ENCODE measurements at regions of chr2 and their contacts with region 1.

Region 1: DNA sequence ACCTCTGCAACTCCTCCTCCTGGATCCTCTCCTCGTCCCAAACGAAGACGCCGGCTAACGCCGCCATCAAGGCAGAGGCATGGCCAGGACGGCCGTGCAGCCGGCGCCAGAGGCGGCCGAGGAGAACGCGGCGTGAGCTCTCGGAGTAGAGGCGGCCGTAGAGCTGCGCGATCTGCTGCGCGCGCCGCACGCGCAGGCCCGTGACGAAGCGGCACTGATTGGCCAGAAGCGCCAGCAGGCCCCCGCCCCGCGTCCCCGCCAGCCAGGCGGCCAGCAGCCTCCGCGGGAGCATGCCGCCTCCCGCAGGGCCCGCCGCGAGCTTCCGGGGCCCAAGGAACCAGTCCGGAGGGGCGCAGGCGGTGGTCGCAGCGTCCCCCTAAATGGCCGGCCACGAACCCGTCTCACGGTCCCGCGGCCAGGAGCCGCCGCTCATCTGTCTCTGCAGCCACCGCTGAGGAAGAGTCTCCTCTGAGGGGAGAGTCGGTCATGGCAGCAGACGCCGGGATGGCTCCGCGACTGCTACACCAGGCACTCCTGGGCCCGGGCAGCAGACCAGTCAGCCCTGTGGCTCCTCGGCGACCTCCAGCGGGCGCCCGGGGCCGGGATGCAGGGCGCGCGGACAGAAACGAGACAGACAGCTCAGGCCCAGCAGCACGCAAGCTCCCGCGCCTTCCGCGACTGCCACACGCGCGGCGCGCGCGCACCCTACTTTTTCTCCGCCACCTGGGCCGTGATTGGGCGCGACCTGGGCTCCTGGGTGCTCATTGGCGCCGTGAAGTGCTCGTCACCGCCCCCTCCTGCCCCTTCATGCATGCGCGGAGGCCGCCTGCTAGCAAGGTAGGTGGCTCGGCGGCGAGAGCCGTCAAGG is at the start of gene STARD7:
- DNase-seq: peak; percentile 93 to 97 (median 95)
- ATAC-seq: peak; percentile 92
- H3K4me3 ChIP-seq: peak within 1 kb of the TSS; percentile 83
- H3K4me3 Mint-ChIP-seq: peak within 1 kb of the TSS; percentile 88 to 100 (median 95)
- H3K27ac ChIP-seq: peak within 1 kb of the TSS; percentile 87
- H3K27ac Mint-ChIP-seq: peak within 1 kb of the TSS; percentile 86 to 99 (median 93)
- H3K4me1 ChIP-seq: peaks cover 30 to 37% of the 10 kb centered on the region in 2 donors
- H3K4me1 Mint-ChIP-seq: peaks cover 37 to 57% (median 51%) of the 10 kb centered on the region in 7 donors
- H3K27me3 ChIP-seq: no peaks in the 10 kb centered on the region
- H3K27me3 Mint-ChIP-seq: no peaks in the 10 kb centered on the region
- total RNA-seq, gene STARD7: 56.5 to 133 (median 74.2) TPM

Region 2: GRCh38 chr2:96083064-96083939 is 125.1 kb before region 1 on chr2:
- CTCF ChIA-PET with region 1: no interaction called
- POLR2A ChIA-PET with region 1: no interaction called
- intact Hi-C with region 1: no loop called
- DNase-seq: no peak
- ATAC-seq: no peak
- H3K4me3 ChIP-seq: no peak overlapping the region
- H3K4me3 Mint-ChIP-seq: no peak overlapping the region
- H3K27ac ChIP-seq: no peak overlapping the region
- H3K27ac Mint-ChIP-seq: no peak overlapping the region
- H3K4me1 ChIP-seq: no peaks in the 10 kb centered on the region
- H3K4me1 Mint-ChIP-seq: peaks cover 0 to 2% (median 0%) of the 10 kb centered on the region in 7 donors
- H3K27me3 ChIP-seq: peaks cover 0 to 2% of the 10 kb centered on the region in 2 donors
- H3K27me3 Mint-ChIP-seq: peaks cover 0 to 33% (median 0%) of the 10 kb centered on the region in 5 donors

Region 3: DNA sequence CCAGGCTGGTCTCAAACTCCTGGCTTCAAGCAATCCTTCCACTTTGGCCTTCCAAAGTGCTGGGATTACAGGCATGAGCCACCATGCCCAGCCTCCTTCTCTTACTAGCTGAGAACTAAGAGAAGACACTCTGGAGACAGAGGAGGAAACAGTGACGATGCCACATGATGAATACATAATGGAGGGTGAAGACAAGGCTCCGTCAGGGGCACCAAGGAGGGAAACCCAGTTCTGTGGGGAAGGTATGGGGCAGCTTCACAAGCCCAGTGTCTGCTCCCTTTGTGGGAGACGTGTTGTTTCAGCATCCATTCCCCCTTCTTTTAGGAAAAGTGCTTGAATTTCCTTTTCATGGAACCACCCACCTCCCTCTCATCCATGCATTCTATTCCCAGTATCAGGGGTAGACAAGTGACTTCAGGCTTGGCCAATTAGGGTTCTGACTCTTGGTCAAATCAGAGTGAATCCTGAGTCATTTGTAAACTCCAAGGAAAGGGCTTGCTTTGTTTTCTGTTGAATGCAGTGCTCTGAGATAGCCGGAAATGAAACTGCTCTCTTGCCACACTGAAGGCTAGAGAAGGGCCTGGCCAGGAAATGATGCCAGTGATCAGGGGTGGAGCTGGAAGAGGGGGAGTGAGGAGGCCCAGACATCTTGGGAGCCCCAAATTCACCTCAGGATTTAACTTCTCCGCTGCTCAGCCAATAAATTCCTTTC is 33.7 kb after region 1 on chr2:
- CTCF ChIA-PET with region 1: no interaction called
- POLR2A ChIA-PET with region 1: interaction called, 12 read pairs
- intact Hi-C with region 1: loop called (anchors 1 kb)
- DNase-seq: peak in 8 of 9 donors; percentile 17 to 57 (median 42)
- ATAC-seq: peak; percentile 89
- H3K4me3 ChIP-seq: peak overlapping the region; percentile 43
- H3K4me3 Mint-ChIP-seq: peak overlapping the region; percentile 53 to 79 (median 68)
- H3K27ac ChIP-seq: peak overlapping the region; percentile 67
- H3K27ac Mint-ChIP-seq: peak overlapping the region; percentile 91 to 96 (median 94)
- H3K4me1 ChIP-seq: peaks cover 24 to 30% of the 10 kb centered on the region in 2 donors
- H3K4me1 Mint-ChIP-seq: peaks cover 26 to 57% (median 52%) of the 10 kb centered on the region in 7 donors
- H3K27me3 ChIP-seq: no peaks in the 10 kb centered on the region
- H3K27me3 Mint-ChIP-seq: no peaks in the 10 kb centered on the region

Region 4: DNA sequence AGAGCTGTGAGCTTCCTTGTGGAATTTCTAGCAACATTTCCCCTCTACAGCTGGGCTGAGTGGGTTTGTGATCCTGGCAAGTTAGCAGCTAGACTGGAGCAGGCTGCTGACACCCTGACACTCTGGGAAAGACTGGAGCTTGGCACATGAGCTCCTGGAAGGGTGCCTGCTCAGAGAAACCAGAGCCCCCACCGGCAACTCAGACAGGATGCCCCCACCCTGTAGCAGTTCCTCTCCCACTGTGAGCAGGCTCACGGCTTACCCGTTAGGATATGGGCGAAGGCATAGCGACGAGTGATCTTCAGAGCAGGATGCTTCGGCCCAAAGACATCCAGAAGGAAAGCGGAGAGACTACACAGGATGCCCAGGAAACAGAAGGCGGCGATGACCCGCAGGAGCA is 46.2 kb after region 1 on chr2:
- CTCF ChIA-PET with region 1: no interaction called
- POLR2A ChIA-PET with region 1: interaction called, 21 read pairs
- intact Hi-C with region 1: loop called in 1 of 2 experiments (anchors 2 kb)
- DNase-seq: no peak
- ATAC-seq: no peak
- H3K4me3 ChIP-seq: no peak overlapping the region
- H3K4me3 Mint-ChIP-seq: peak overlapping the region in 1 of 10 donors; percentile 22
- H3K27ac ChIP-seq: no peak overlapping the region
- H3K27ac Mint-ChIP-seq: peak overlapping the region in 5 of 9 donors; percentile 21 to 73 (median 46)
- H3K4me1 ChIP-seq: peaks cover 0 to 48% of the 10 kb centered on the region in 2 donors
- H3K4me1 Mint-ChIP-seq: peaks cover 37 to 67% (median 53%) of the 10 kb centered on the region in 7 donors
- H3K27me3 ChIP-seq: no peaks in the 10 kb centered on the region
- H3K27me3 Mint-ChIP-seq: no peaks in the 10 kb centered on the region

Region 5: GRCh38 chr2:96260404-96261260 is 52.3 kb after region 1 on chr2:
- CTCF ChIA-PET with region 1: interaction called, 4 read pairs
- POLR2A ChIA-PET with region 1: interaction called, 32 read pairs
- intact Hi-C with region 1: loop called in 1 of 2 experiments (anchors 2 kb)
- DNase-seq: peak in 7 of 9 donors; percentile 24 to 42 (median 36)
- ATAC-seq: peak; percentile 65
- H3K4me3 ChIP-seq: no peak overlapping the region
- H3K4me3 Mint-ChIP-seq: peak overlapping the region in 9 of 10 donors; percentile 20 to 56 (median 36)
- H3K27ac ChIP-seq: peak overlapping the region; percentile 24
- H3K27ac Mint-ChIP-seq: peak overlapping the region; percentile 69 to 92 (median 78)
- H3K4me1 ChIP-seq: peaks cover 16 to 75% of the 10 kb centered on the region in 2 donors
- H3K4me1 Mint-ChIP-seq: peaks cover 42 to 94% (median 79%) of the 10 kb centered on the region in 7 donors
- H3K27me3 ChIP-seq: no peaks in the 10 kb centered on the region
- H3K27me3 Mint-ChIP-seq: no peaks in the 10 kb centered on the region

Region 6: GRCh38 chr2:96305091-96305978 is 97.0 kb after region 1 on chr2 and contains the start of gene SNRNP200:
- CTCF ChIA-PET with region 1: no interaction called
- POLR2A ChIA-PET with region 1: interaction called, 3 read pairs
- intact Hi-C with region 1: loop called (anchors 1 kb)
- DNase-seq: peak; percentile 77 to 92 (median 90)
- ATAC-seq: peak; percentile 96
- H3K4me3 ChIP-seq: peak within 1 kb of the TSS; percentile 85
- H3K4me3 Mint-ChIP-seq: peak within 1 kb of the TSS; percentile 94 to 100 (median 99)
- H3K27ac ChIP-seq: peak within 1 kb of the TSS; percentile 94
- H3K27ac Mint-ChIP-seq: peak within 1 kb of the TSS; percentile 97 to 100 (median 99)
- H3K4me1 ChIP-seq: peaks cover 30 to 41% of the 10 kb centered on the region in 2 donors
- H3K4me1 Mint-ChIP-seq: peaks cover 41 to 61% (median 58%) of the 10 kb centered on the region in 7 donors
- H3K27me3 ChIP-seq: no peaks in the 10 kb centered on the region
- H3K27me3 Mint-ChIP-seq: no peaks in the 10 kb centered on the region
- total RNA-seq, gene SNRNP200: 165 to 255 (median 212) TPM

Region 7: GRCh38 chr2:96320728-96321622 is 112.6 kb after region 1 on chr2:
- CTCF ChIA-PET with region 1: no interaction called
- POLR2A ChIA-PET with region 1: interaction called, 6 read pairs
- intact Hi-C with region 1: loop called (anchors 5 kb)
- DNase-seq: peak in 3 of 9 donors; percentile 13 to 62 (median 19)
- ATAC-seq: peak; percentile 28
- H3K4me3 ChIP-seq: peak overlapping the region; percentile 82
- H3K4me3 Mint-ChIP-seq: peak overlapping the region; percentile 86 to 95 (median 91)
- H3K27ac ChIP-seq: peak overlapping the region; percentile 53
- H3K27ac Mint-ChIP-seq: peak overlapping the region in 7 of 9 donors; percentile 6 to 89 (median 62)
- H3K4me1 ChIP-seq: peaks cover 21 to 42% of the 10 kb centered on the region in 2 donors
- H3K4me1 Mint-ChIP-seq: peaks cover 7 to 67% (median 33%) of the 10 kb centered on the region in 7 donors
- H3K27me3 ChIP-seq: no peaks in the 10 kb centered on the region
- H3K27me3 Mint-ChIP-seq: peaks cover 0 to 7% (median 0%) of the 10 kb centered on the region in 5 donors

Region 8: DNA sequence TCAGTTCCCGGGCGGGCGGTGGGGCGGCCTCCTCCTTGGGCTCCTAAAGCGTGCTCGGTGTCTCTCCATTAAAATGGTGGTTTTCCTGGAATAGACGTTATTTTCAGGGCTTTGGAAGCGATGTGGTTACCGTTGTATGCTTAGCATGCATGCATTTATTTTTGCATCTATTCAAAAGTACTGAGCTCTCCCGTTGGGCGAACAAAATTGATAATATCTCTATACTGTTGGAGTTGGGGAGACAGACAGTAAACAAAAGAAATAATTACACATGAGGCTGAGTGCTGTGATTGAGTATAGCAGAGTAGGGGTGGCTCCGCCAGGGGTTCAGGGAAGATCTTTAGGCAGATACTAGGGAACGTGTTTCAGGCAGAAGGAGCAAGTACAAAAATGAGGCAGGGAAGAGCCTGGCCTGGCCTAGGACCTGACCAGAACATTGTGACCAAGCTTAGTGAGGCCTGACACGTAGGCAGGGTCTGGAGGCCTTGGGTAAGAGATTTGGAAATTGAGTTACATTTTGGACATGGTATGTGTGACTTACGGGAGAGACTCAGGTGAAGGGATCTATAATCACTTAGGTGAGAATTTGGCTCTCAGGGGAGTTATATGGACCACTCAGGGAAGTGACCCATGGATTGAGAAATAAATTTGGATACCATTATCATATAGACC is 127.9 kb after region 1 on chr2:
- CTCF ChIA-PET with region 1: no interaction called
- POLR2A ChIA-PET with region 1: no interaction called
- intact Hi-C with region 1: loop called in 1 of 2 experiments (anchors 1 kb)
- DNase-seq: no peak
- ATAC-seq: no peak
- H3K4me3 ChIP-seq: peak overlapping the region; percentile 87
- H3K4me3 Mint-ChIP-seq: peak overlapping the region; percentile 59 to 91 (median 82)
- H3K27ac ChIP-seq: peak overlapping the region; percentile 91
- H3K27ac Mint-ChIP-seq: peak overlapping the region; percentile 29 to 92 (median 77)
- H3K4me1 ChIP-seq: peaks cover 3 to 20% of the 10 kb centered on the region in 2 donors
- H3K4me1 Mint-ChIP-seq: peaks cover 18 to 62% (median 25%) of the 10 kb centered on the region in 7 donors
- H3K27me3 ChIP-seq: no peaks in the 10 kb centered on the region
- H3K27me3 Mint-ChIP-seq: no peaks in the 10 kb centered on the region

Measured in naive thymus-derived CD4-positive, alpha-beta T cell (primary cell).